GM12878 (cell line): ENCODE measurements at regions of chr10 and their contacts with region 1.

Region 1: GRCh38 chr10:96292971-96293920 is 11.0 kb upstream of the DNTT start:
- DNase-seq: no peak
- ATAC-seq: peak; percentile 79
- H3K4me3 ChIP-seq: no peak overlapping the region
- H3K27ac ChIP-seq: no peak overlapping the region
- H3K4me1 ChIP-seq: peaks cover 35% of the 10 kb centered on the region
- H3K27me3 ChIP-seq: no peaks in the 10 kb centered on the region
- CTCF ChIP-seq: peak; percentile 58 to 83 (median 76); a peak in 4 of 6 replicates
- EP300 ChIP-seq: no peak
- POLR2A ChIP-seq: no peak
- RAD21 ChIP-seq: peak; percentile 92

Region 2: DNA sequence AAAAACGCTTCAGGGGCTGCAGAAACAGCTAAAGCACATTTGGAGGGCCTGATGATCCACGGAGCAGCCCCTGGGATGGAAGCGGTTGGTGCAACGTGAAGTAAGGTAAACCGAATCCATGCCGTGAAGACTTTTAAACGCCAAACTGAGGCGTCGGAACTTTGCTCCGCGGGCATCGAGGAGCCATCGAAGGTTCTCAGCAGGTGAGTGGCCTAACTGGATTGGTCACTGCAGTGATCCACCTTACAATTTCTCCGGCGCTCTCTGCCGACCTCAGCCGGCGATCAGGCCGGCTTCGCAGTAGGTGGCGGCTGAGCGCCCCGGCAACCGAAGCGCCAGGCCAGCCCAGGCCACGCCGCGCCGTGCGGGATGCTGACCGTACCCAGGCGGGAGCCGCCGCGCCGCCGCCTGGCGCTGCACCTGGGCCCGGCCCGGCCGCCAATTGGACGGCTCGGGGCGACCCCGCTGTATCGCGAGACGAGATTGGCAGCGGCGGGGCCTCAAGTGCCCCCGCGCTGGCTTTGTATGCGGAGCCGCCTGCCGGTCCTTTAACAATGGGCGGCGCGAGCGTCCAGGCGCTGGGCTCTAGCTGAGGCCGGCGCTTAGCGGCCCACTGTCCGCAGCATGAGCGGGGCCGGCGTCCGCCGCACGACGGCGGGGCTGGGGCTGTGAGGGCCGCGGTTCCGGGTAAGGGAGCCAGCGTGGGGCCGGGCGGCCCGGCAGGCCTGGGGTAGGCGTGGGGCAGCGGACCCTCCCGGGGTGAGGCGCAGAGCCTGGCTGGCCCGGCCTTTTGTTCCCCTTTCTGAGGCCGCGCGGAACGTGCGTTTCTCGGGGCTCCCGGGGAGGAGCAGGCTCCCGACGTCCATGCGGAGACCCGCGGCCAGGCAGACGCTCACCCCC is 250.0 kb before region 1 on chr10 and contains the start of gene CCNJ:
- CTCF ChIA-PET with region 1: interaction called, 11 read pairs
- POLR2A ChIA-PET with region 1: no interaction called
- RAD21 ChIA-PET with region 1: interaction called, 6 read pairs
- SMC1A ChIA-PET with region 1: interaction called, 4 read pairs
- in situ Hi-C with region 1: no loop called
- intact Hi-C with region 1: loop called (anchors 10 kb)
- DNase-seq: peak; percentile 39
- ATAC-seq: peak; percentile 90
- H3K4me3 ChIP-seq: peak within 1 kb of the TSS; percentile 95
- H3K27ac ChIP-seq: peak within 1 kb of the TSS; percentile 74
- H3K4me1 ChIP-seq: peaks cover 6% of the 10 kb centered on the region
- H3K27me3 ChIP-seq: no peaks in the 10 kb centered on the region
- CTCF ChIP-seq: peak in 1 of 3 experiments; percentile 21; a peak in 1 of 6 replicates
- EP300 ChIP-seq: no peak
- POLR2A ChIP-seq: peak; percentile 84
- RAD21 ChIP-seq: no peak
- polyA plus RNA-seq, gene CCNJ: 0.56 to 1.5 TPM

Region 3: DNA sequence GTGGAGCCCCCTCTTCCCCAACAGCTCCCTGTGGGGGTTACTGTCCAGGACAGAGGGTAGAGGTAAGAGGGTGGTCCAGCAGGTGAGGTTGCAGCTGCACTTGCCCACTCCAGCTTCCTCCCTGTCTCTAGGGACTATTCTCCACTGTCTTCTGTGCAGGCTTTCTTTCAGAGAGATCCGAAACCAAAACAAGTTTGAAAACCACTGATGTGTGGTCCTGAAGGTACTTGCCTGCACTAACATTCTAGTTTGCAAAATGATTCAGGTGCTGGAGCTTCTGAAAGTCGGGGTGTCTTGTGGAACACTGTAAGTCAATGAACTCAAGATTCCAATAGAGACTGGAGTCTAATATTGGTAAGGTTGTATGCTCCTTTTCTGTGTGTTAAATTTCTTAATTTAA is 85.0 kb before region 1 on chr10:
- CTCF ChIA-PET with region 1: interaction called, 16 read pairs
- POLR2A ChIA-PET with region 1: no interaction called
- RAD21 ChIA-PET with region 1: interaction called, 5 read pairs
- SMC1A ChIA-PET with region 1: interaction called, 6 read pairs
- in situ Hi-C with region 1: no loop called
- intact Hi-C with region 1: no loop called
- DNase-seq: peak; percentile 21
- ATAC-seq: peak; percentile 82
- H3K4me3 ChIP-seq: no peak overlapping the region
- H3K27ac ChIP-seq: no peak overlapping the region
- H3K4me1 ChIP-seq: peaks cover 18% of the 10 kb centered on the region
- H3K27me3 ChIP-seq: no peaks in the 10 kb centered on the region
- CTCF ChIP-seq: no peak
- EP300 ChIP-seq: no peak
- POLR2A ChIP-seq: no peak
- RAD21 ChIP-seq: 0 out of 2 replicates have a peak, but pooled peaks have one; percentile 1

Region 4: GRCh38 chr10:96236090-96236478 is 57.2 kb before region 1 on chr10:
- CTCF ChIA-PET with region 1: interaction called, 790 read pairs
- POLR2A ChIA-PET with region 1: interaction called, 60 read pairs
- RAD21 ChIA-PET with region 1: interaction called, 428 read pairs
- SMC1A ChIA-PET with region 1: interaction called, 424 read pairs
- in situ Hi-C with region 1: no loop called
- intact Hi-C with region 1: no loop called
- DNase-seq: no peak
- ATAC-seq: peak; percentile 66
- H3K4me3 ChIP-seq: no peak overlapping the region; the same call in 1 of the 2 replicates
- H3K27ac ChIP-seq: peak overlapping the region; percentile 45; the same call in 1 of the 2 replicates
- H3K4me1 ChIP-seq: peaks cover 37% of the 10 kb centered on the region
- H3K27me3 ChIP-seq: no peaks in the 10 kb centered on the region
- CTCF ChIP-seq: no peak
- EP300 ChIP-seq: no peak
- POLR2A ChIP-seq: no peak
- RAD21 ChIP-seq: no peak

Region 5: GRCh38 chr10:96257944-96258343 is 35.3 kb before region 1 on chr10:
- CTCF ChIA-PET with region 1: interaction called, 26 read pairs
- POLR2A ChIA-PET with region 1: interaction called, 12 read pairs
- RAD21 ChIA-PET with region 1: interaction called, 362 read pairs
- SMC1A ChIA-PET with region 1: interaction called, 140 read pairs
- in situ Hi-C with region 1: no loop called
- intact Hi-C with region 1: no loop called
- DNase-seq: no peak
- ATAC-seq: peak; percentile 19; the same call in 2 of the 3 replicates
- H3K4me3 ChIP-seq: peak overlapping the region; percentile 1; the same call in 1 of the 2 replicates
- H3K27ac ChIP-seq: peak overlapping the region; percentile 38
- H3K4me1 ChIP-seq: peaks cover 34% of the 10 kb centered on the region
- H3K27me3 ChIP-seq: no peaks in the 10 kb centered on the region
- CTCF ChIP-seq: no peak
- EP300 ChIP-seq: no peak
- POLR2A ChIP-seq: no peak
- RAD21 ChIP-seq: no peak

Region 6: DNA sequence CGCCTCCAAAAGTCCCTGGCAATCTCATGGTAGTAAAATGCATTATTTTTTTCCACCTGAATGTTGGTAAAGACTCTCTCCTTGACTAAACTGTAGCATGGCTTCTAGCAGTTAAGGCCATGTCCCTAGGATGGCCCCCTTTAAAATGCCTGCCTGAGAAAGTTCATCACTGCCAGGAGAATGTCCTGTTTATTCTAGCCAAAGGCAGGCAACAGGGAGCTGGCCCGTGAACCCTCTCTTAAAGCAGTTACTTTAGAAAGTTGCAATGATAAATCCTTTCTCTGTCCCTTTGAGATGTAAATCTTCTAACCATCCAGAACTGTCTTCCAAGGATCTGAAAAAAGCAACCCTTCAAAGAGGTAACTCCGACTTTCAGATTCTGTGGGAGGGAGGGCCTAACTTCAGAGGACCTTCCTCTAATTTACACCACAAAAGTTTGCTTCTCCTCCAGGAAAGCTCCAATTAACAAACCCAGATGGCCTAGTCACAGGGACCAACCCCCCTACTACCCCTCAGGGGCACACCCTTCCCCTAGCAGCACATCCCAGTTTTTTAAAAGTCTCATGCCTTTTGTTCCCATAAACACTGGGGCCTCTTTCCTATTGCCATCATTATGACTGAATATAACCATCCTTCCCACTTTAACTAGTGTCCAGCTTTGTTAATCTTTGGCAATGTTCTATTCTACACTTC is 16.5 kb after region 1 on chr10:
- CTCF ChIA-PET with region 1: interaction called, 24 read pairs
- POLR2A ChIA-PET with region 1: interaction called, 3 read pairs
- RAD21 ChIA-PET with region 1: interaction called, 3 read pairs
- SMC1A ChIA-PET with region 1: interaction called, 3 read pairs
- in situ Hi-C with region 1: no loop called
- intact Hi-C with region 1: no loop called
- DNase-seq: no peak
- ATAC-seq: no peak
- H3K4me3 ChIP-seq: no peak overlapping the region
- H3K27ac ChIP-seq: no peak overlapping the region
- H3K4me1 ChIP-seq: no peaks in the 10 kb centered on the region
- H3K27me3 ChIP-seq: peaks cover 0 to 2% of the 10 kb centered on the region in 2 experiments; a peak in 1 of 4 replicates
- CTCF ChIP-seq: no peak
- EP300 ChIP-seq: no peak
- POLR2A ChIP-seq: no peak
- RAD21 ChIP-seq: no peak